Mucosa of descending colon (tissue), 3 donors: ENCODE measurements at regions of chr15 and their contacts with region 1.

Region 1: GRCh38 chr15:58758138-58758537 is 8.6 kb upstream of the ADAM10 start:
- DNase-seq: no peak
- ATAC-seq: no peak
- H3K4me3 ChIP-seq: no peak overlapping the region
- H3K4me1 ChIP-seq: no peaks in the 10 kb centered on the region
- CTCF ChIP-seq: peak; percentile 5

Region 2: GRCh38 chr15:58269455-58270414 is 488.4 kb before region 1 on chr15:
- intact Hi-C with region 1: loop called in 1 of 2 experiments (anchors 5 kb)
- DNase-seq: peak in 2 of 3 donors; percentile 62 to 76
- ATAC-seq: peak; percentile 97
- H3K4me3 ChIP-seq: no peak overlapping the region
- H3K4me1 ChIP-seq: no peaks in the 10 kb centered on the region
- CTCF ChIP-seq: peak; percentile 29

Region 3: GRCh38 chr15:59028387-59028955 is 270.3 kb after region 1 on chr15:
- intact Hi-C with region 1: no loop called
- DNase-seq: no peak
- ATAC-seq: no peak
- H3K4me3 ChIP-seq: no peak overlapping the region
- H3K4me1 ChIP-seq: no peaks in the 10 kb centered on the region
- CTCF ChIP-seq: no peak